AG04450 (cell line): ENCODE measurements at regions of chr21 and their contacts with region 1.

Region 1: GRCh38 chr21:46048926-46049889 is 48.7 kb upstream of the COL6A2 start:
- DNase-seq: peak; percentile 100
- H3K4me3 ChIP-seq: peak overlapping the region; percentile 32; the same call in 1 of the 2 replicates
- H3K27ac ChIP-seq: peak overlapping the region; percentile 100
- H3K27me3 ChIP-seq: no peaks in the 10 kb centered on the region
- CTCF ChIP-seq: no peak

Region 2: GRCh38 chr21:45973659-45974072 is 75.5 kb before region 1 on chr21:
- CTCF ChIA-PET with region 1: no interaction called
- POLR2A ChIA-PET with region 1: interaction called, 14 read pairs
- DNase-seq: no peak
- H3K4me3 ChIP-seq: peak overlapping the region; percentile 48
- H3K27ac ChIP-seq: peak overlapping the region; percentile 97
- H3K27me3 ChIP-seq: no peaks in the 10 kb centered on the region
- CTCF ChIP-seq: peak; percentile 81

Region 3: DNA sequence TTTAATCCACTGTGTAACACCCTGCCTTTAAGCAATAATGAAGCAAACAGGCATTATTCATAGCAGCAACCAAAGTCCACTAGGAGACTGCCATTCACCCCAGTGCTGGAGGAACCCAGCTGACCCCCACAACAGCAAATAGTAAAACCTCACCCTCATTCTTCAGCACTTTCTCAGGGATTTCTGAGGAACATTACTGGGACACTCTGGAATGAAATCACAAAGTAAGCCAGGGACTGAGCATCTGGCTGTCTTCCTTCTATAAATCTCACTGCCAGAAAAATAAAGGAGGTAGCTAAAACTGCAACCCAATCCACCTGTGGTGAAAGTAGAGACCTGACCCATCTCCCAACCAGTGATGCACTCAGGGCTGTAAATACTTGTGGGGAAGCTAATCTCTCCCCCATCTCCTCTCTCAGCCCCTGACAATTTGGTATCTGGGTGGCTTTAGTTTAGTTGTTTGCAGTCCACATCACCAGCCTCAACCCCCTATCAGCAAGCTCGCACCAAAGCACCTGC is 20.6 kb before region 1 on chr21:
- CTCF ChIA-PET with region 1: no interaction called
- POLR2A ChIA-PET with region 1: interaction called, 29 read pairs
- DNase-seq: peak; percentile 56
- H3K4me3 ChIP-seq: no peak overlapping the region
- H3K27ac ChIP-seq: peak overlapping the region; percentile 87
- H3K27me3 ChIP-seq: no peaks in the 10 kb centered on the region
- CTCF ChIP-seq: no peak

Region 4: GRCh38 chr21:46038871-46039397 is 10.3 kb before region 1 on chr21:
- CTCF ChIA-PET with region 1: no interaction called
- POLR2A ChIA-PET with region 1: interaction called, 16 read pairs
- DNase-seq: no peak
- H3K4me3 ChIP-seq: no peak overlapping the region
- H3K27ac ChIP-seq: peak overlapping the region; percentile 52
- H3K27me3 ChIP-seq: no peaks in the 10 kb centered on the region
- CTCF ChIP-seq: no peak

Region 5: DNA sequence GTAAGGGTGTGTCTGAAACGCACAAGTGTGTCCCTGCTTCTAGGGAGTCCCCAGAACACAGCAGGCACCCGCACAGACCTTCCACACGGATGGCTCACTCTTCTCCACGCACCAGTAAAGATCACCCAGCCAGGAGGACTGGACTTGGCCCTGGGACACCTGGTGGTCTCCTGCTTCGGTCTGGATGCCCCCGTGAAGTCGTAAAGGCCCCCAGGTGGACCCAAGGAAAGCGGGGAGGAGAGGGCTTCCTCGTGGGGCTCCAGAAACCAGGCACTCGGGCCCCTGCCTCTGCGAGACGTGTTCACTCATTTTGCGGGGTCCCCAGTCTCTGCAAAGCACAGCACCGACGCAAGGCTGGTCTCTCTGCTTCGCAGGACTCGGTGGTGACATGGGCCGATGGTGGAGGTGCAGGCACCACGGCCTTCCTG is 28.5 kb after region 1 on chr21:
- CTCF ChIA-PET with region 1: no interaction called
- POLR2A ChIA-PET with region 1: no interaction called
- DNase-seq: no peak
- H3K4me3 ChIP-seq: no peak overlapping the region
- H3K27ac ChIP-seq: no peak overlapping the region
- H3K27me3 ChIP-seq: no peaks in the 10 kb centered on the region
- CTCF ChIP-seq: no peak

Region 6: DNA sequence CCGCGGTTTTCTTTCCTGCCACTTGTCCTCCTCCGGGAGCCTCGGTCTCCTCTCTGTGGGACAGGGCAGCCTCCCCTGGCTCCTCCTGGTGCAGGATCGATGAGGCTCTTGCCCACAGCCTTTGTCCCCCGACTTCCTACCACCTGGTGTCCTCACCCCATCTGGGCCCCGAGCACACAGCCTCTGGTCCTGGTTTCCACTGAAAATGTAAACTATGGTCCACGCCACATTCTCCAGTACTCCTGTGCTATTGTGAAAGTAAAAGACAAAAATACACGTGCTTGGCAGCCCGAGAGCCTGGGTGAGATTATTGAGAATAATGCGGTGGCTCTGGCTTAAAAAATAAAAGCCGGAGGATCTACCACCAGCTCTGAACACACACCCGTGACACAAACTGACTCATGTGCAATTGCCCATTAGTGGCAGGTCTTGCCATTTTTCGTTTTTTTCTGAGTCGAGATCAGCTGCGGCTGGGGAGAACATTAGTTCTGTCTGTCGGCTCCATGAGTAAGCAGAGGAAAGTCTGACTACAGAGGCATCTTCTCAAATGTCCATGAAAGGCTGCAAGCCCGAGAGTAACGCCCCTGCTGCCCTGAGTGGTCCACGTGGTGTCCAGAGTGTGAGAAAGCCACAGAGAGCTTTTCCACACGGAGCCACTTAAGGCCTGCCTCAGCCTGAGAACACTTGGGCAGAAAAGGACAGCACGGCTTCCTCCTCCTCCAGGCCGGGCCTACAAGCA is 43.0 kb after region 1 on chr21:
- CTCF ChIA-PET with region 1: no interaction called
- POLR2A ChIA-PET with region 1: interaction called, 10 read pairs
- DNase-seq: peak; percentile 96
- H3K4me3 ChIP-seq: peak overlapping the region; percentile 54
- H3K27ac ChIP-seq: peak overlapping the region; percentile 100
- H3K27me3 ChIP-seq: no peaks in the 10 kb centered on the region
- CTCF ChIP-seq: no peak

Region 7: GRCh38 chr21:46264690-46265144 is 215.5 kb after region 1 on chr21:
- CTCF ChIA-PET with region 1: no interaction called
- POLR2A ChIA-PET with region 1: no interaction called
- DNase-seq: no peak
- H3K4me3 ChIP-seq: no peak overlapping the region
- H3K27ac ChIP-seq: no peak overlapping the region
- H3K27me3 ChIP-seq: no peaks in the 10 kb centered on the region
- CTCF ChIP-seq: no peak